ENCODE measurements at regions of chr5 and their contacts with region 1.

Region 1: GRCh38 chr5:176537608-176538504 is 654 bp upstream of the RNF44 start:
- DNase-seq: peak; percentile 99
- ATAC-seq: peak; percentile 75
- H3K4me3 Mint-ChIP-seq: peak overlapping the region; percentile 97
- H3K27ac Mint-ChIP-seq: peak overlapping the region; percentile 97
- H3K4me1 Mint-ChIP-seq: peaks cover 66% of the 10 kb centered on the region
- H3K27me3 Mint-ChIP-seq: no peaks in the 10 kb centered on the region

Region 2: DNA sequence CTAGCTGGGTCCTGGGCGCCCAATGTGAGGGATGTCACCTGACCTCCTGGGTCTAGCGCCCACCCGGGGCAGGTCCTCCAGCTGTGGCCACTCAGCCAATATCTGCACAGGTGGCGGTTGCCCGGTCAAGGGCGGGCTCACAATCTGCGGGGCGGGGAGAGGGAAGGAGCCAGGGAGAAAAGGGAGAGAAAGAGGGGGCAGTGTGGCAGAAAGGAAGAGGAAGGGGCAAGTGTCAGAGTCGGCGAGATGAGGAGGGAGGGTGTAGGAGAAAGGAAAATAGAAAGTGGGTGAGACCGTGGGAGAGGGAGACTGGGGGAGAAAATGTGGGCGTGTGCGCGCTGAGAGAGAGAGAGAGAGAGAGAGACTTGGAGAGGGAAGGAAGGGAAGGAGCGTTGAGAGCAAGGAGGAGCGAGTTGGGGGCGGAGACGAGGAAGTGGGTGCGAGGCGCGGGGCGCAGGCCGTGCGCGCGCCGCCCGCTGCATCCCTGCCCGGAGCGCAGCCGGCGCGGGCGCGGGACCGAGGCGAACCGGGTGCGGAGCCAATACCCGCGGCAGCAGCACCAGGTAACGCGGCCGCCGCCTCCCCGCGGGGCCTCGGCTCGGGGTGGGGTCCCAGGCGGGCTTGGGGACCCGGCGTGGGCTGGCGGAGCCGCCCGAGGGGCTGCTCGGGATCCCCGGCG is 880.1 kb before region 1 on chr5 and contains the start of gene HRH2:
- CTCF ChIA-PET with region 1: no interaction called
- POLR2A ChIA-PET with region 1: no interaction called
- intact Hi-C with region 1: loop called in 1 of 2 experiments (anchors 5 kb)
- DNase-seq: peak; percentile 76
- ATAC-seq: peak; percentile 46
- H3K4me3 Mint-ChIP-seq: peak within 1 kb of the TSS; percentile 93
- H3K27ac Mint-ChIP-seq: peak within 1 kb of the TSS; percentile 94
- H3K4me1 Mint-ChIP-seq: peaks cover 75% of the 10 kb centered on the region
- H3K27me3 Mint-ChIP-seq: no peaks in the 10 kb centered on the region
- total RNA-seq, gene HRH2: 12.3 to 16.9 TPM

Region 3: DNA sequence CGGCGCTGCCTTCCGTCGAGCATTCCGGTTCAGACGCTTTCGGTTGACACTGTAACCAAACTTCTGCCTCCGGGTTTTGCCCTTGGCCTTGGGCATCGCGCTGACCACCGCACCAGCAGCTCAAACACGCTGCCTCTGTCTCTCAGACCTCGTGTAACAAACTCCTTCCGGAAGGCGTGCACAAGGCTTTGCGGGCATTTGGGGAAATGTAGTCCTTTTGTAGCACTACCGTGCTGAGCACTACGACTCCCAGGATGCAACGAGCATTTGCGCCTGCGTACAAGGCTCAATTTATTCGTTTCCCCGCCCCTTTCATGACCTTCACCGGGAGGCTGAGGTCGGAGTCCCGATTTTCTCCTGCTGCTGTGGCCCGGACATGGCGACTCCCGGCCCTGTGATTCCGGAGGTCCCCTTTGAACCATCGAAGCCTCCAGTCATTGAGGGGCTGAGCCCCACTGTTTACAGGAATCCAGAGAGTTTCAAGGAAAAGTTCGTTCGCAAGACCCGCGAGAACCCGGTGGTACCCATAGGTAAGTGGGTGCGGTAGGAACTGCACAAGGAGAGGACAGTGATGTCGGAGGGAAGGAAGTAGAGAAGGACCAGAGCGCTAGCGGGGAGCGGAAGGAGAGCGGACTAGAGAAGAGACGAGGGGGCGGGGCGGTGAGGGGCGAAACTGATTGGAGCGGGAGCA is 149.3 kb before region 1 on chr5 and contains the starts of genes HIGD2A and NOP16:
- CTCF ChIA-PET with region 1: no interaction called
- POLR2A ChIA-PET with region 1: interaction called, 5 read pairs
- intact Hi-C with region 1: loop called (anchors 1 kb)
- DNase-seq: peak; percentile 100
- ATAC-seq: peak; percentile 93
- H3K4me3 Mint-ChIP-seq: peak within 1 kb of the TSS; percentile 95
- H3K27ac Mint-ChIP-seq: peak within 1 kb of the TSS; percentile 100
- H3K4me1 Mint-ChIP-seq: peaks cover 31% of the 10 kb centered on the region
- H3K27me3 Mint-ChIP-seq: no peaks in the 10 kb centered on the region
- total RNA-seq, gene HIGD2A: 104 to 140 TPM
- total RNA-seq, gene NOP16: 54.3 to 65.4 TPM

Region 4: GRCh38 chr5:176447982-176448608 is 89.8 kb before region 1 on chr5 and contains the start of gene FAF2:
- CTCF ChIA-PET with region 1: interaction called, 8 read pairs
- POLR2A ChIA-PET with region 1: interaction called, 18 read pairs
- intact Hi-C with region 1: loop called (anchors 1 kb)
- DNase-seq: peak; percentile 98
- ATAC-seq: peak; percentile 98
- H3K4me3 Mint-ChIP-seq: peak within 1 kb of the TSS; percentile 90
- H3K27ac Mint-ChIP-seq: peak within 1 kb of the TSS; percentile 97
- H3K4me1 Mint-ChIP-seq: peaks cover 31% of the 10 kb centered on the region
- H3K27me3 Mint-ChIP-seq: no peaks in the 10 kb centered on the region
- total RNA-seq, gene FAF2: 37.6 to 44.8 TPM

Region 5: GRCh38 chr5:176590035-176590717 is 52.3 kb after region 1 on chr5:
- CTCF ChIA-PET with region 1: no interaction called
- POLR2A ChIA-PET with region 1: no interaction called
- intact Hi-C with region 1: no loop called
- DNase-seq: no peak
- ATAC-seq: no peak
- H3K4me3 Mint-ChIP-seq: no peak overlapping the region
- H3K27ac Mint-ChIP-seq: no peak overlapping the region
- H3K4me1 Mint-ChIP-seq: no peaks in the 10 kb centered on the region
- H3K27me3 Mint-ChIP-seq: no peaks in the 10 kb centered on the region

Region 6: DNA sequence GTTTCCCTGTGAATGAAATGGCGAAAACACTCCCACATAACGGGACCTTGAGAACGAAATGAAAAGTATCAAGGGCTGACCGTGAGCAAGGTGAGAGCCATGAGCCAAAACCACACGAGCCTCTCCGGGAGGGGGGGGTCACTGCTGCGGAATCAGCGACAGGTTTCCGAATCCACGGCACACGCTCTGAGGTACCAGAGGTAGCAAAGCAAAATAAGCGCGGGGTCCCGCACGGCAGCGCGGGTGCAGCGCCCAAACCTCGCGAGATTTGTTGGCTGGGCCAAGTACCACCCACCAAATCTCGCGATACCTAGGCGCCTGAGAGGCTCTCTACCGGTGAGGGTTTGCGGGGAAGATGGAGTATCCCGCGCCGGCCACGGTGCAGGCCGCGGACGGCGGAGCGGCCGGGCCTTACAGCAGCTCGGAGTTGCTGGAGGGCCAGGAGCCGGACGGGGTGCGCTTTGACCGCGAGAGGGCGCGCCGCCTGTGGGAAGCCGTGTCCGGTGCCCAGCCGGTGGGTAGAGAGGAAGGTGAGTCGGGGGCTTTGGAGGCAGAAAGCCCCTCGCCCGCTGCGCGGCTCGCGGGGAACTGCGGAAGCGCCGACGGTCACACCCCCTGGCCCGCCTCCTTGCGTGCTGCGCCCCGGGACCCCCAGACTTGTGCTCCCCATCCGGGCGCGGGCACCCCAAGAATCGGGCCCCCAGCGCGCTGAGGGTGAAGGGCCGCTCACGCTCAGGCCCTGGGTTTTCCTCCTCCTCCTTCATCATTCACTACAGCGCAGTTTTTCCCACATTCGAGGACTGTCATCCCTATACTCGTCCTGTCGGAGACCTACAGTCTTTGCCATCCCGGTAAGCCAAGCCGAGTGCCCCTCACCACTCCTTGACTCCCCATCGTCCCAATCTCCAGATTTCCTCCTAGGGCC is 484.8 kb after region 1 on chr5 and contains the start of gene ZNF346:
- CTCF ChIA-PET with region 1: no interaction called
- POLR2A ChIA-PET with region 1: no interaction called
- intact Hi-C with region 1: loop called in 1 of 2 experiments (anchors 2 kb)
- DNase-seq: peak; percentile 97
- ATAC-seq: peak; percentile 97
- H3K4me3 Mint-ChIP-seq: peak within 1 kb of the TSS; percentile 91
- H3K27ac Mint-ChIP-seq: peak within 1 kb of the TSS; percentile 95
- H3K4me1 Mint-ChIP-seq: peaks cover 34% of the 10 kb centered on the region
- H3K27me3 Mint-ChIP-seq: no peaks in the 10 kb centered on the region
- total RNA-seq, gene ZNF346: 16.5 to 23.3 TPM

Region 7: GRCh38 chr5:177311723-177312648 is 774.1 kb after region 1 on chr5 and contains the start of gene MXD3:
- CTCF ChIA-PET with region 1: no interaction called
- POLR2A ChIA-PET with region 1: no interaction called
- intact Hi-C with region 1: loop called in 1 of 2 experiments (anchors 1 kb)
- DNase-seq: peak; percentile 99
- ATAC-seq: peak; percentile 88
- H3K4me3 Mint-ChIP-seq: peak within 1 kb of the TSS; percentile 85
- H3K27ac Mint-ChIP-seq: peak within 1 kb of the TSS; percentile 84
- H3K4me1 Mint-ChIP-seq: peaks cover 28% of the 10 kb centered on the region
- H3K27me3 Mint-ChIP-seq: no peaks in the 10 kb centered on the region
- total RNA-seq, gene MXD3: 21.3 to 27.2 TPM